CD8-positive, alpha-beta T cell (primary cell): ENCODE measurements at regions of chr6 and their contacts with region 1.

Region 1: DNA sequence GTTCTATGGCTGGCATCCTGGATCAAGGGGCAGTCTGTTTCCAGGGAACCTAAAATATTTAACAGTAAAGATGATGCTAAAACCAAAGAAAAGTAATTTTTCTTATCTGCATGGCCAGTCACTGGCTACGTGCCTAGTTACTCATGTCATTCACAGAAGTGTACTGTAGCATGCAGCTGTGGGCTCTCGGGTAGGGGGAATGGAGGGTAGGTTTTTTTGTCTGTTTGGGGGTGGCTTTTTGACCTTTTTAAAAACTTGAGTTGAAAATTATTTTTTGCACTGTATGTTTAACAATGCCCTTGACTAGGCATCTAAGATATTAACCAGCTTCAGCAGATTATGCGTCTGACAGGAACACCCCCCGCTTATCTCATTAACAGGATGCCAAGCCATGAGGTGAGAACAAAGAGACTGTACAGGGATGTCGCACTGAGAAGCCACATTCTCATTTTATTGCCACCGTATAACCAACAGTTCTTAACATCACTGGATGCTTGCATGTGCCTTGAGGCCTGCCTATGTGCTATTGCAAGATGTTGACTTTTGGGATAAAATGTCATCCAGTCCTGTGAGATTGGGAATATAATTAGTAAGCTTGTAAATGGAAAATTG is 30.3 kb upstream of the MAPK13 start:
- DNase-seq: peak; percentile 29 to 87 (median 56)
- ATAC-seq: peak; percentile 87
- H3K4me3 ChIP-seq: peak overlapping the region in 1 of 2 experiments; percentile 1
- H3K4me3 Mint-ChIP-seq: peak overlapping the region; percentile 64
- H3K27ac ChIP-seq: peak overlapping the region; percentile 46 to 80
- H3K27ac Mint-ChIP-seq: peak overlapping the region; percentile 91
- H3K4me1 ChIP-seq: peaks cover 45% of the 10 kb centered on the region
- H3K4me1 Mint-ChIP-seq: peaks cover 65% of the 10 kb centered on the region
- H3K27me3 ChIP-seq: no peaks in the 10 kb centered on the region
- H3K27me3 Mint-ChIP-seq: no peaks in the 10 kb centered on the region
- CTCF ChIP-seq: no peak

Region 2: GRCh38 chr6:36116943-36117342 is 17.0 kb after region 1 on chr6:
- CTCF ChIA-PET with region 1: interaction called, 88 read pairs
- POLR2A ChIA-PET with region 1: interaction called, 12 read pairs
- intact Hi-C with region 1: loop called (anchors 1 to 2 kb)
- DNase-seq: no peak
- ATAC-seq: no peak
- H3K4me3 ChIP-seq: no peak overlapping the region
- H3K4me3 Mint-ChIP-seq: no peak overlapping the region
- H3K27ac ChIP-seq: no peak overlapping the region
- H3K27ac Mint-ChIP-seq: peak overlapping the region; percentile 1
- H3K4me1 ChIP-seq: peaks cover 94% of the 10 kb centered on the region
- H3K4me1 Mint-ChIP-seq: peaks cover 90% of the 10 kb centered on the region
- H3K27me3 ChIP-seq: no peaks in the 10 kb centered on the region
- H3K27me3 Mint-ChIP-seq: no peaks in the 10 kb centered on the region
- CTCF ChIP-seq: no peak